ENCODE measurements at regions of chr17 and their contacts with region 1.

Region 1: GRCh38 chr17:17041571-17042380 is 481 bp upstream of the MPRIP start:
- DNase-seq: peak; percentile 88 to 96 (median 95)
- ATAC-seq: peak; percentile 99
- H3K4me3 ChIP-seq: peak overlapping the region; percentile 73
- H3K4me3 Mint-ChIP-seq: peak overlapping the region; percentile 66 to 94 (median 76)
- H3K27ac ChIP-seq: peak overlapping the region; percentile 61
- H3K27ac Mint-ChIP-seq: peak overlapping the region in 2 of 9 donors; percentile 50 to 71
- H3K4me1 ChIP-seq: peaks cover 35% of the 10 kb centered on the region in 2 donors
- H3K4me1 Mint-ChIP-seq: peaks cover 37 to 47% (median 43%) of the 10 kb centered on the region in 7 donors
- H3K27me3 ChIP-seq: no peaks in the 10 kb centered on the region
- H3K27me3 Mint-ChIP-seq: peaks cover 0 to 4% (median 0%) of the 10 kb centered on the region in 5 donors

Region 2: GRCh38 chr17:17001874-17002520 is 39.8 kb before region 1 on chr17:
- CTCF ChIA-PET with region 1: no interaction called
- POLR2A ChIA-PET with region 1: no interaction called
- intact Hi-C with region 1: loop called (anchors 5 kb)
- DNase-seq: peak; percentile 46 to 81 (median 74)
- ATAC-seq: peak; percentile 85
- H3K4me3 ChIP-seq: no peak overlapping the region
- H3K4me3 Mint-ChIP-seq: no peak overlapping the region
- H3K27ac ChIP-seq: no peak overlapping the region
- H3K27ac Mint-ChIP-seq: no peak overlapping the region
- H3K4me1 ChIP-seq: peaks cover 3 to 4% of the 10 kb centered on the region in 2 donors
- H3K4me1 Mint-ChIP-seq: peaks cover 0 to 5% (median 0%) of the 10 kb centered on the region in 7 donors
- H3K27me3 ChIP-seq: no peaks in the 10 kb centered on the region
- H3K27me3 Mint-ChIP-seq: peaks cover 0 to 7% (median 0%) of the 10 kb centered on the region in 5 donors

Region 3: DNA sequence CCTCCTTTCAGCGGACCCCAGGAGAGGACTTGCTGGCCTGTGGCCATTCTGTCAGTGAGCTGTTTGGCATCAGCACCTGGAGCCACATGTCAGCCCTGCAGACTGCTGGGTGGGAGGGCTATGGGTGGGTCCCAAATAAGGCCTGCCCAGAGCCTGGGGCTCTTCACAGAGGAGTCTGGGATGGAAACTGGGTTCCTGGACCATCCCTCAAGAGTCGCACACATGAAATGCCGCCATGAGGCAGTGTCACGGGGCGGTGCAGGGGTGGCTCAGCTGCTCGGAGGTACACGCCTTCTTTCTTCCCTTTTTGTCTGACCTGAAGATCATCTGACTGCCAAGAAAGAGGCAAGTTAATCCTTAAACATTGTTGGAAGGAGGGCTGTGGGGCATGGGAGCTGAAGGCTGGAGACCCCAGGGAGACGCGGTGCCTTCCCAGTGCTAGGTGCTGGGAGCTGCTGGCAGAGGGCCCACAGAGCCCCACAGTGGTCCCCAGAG is 15.3 kb after region 1 on chr17:
- CTCF ChIA-PET with region 1: no interaction called
- POLR2A ChIA-PET with region 1: no interaction called
- intact Hi-C with region 1: no loop called
- DNase-seq: no peak
- ATAC-seq: no peak
- H3K4me3 ChIP-seq: no peak overlapping the region
- H3K4me3 Mint-ChIP-seq: no peak overlapping the region
- H3K27ac ChIP-seq: no peak overlapping the region
- H3K27ac Mint-ChIP-seq: peak overlapping the region in 1 of 9 donors; percentile 67
- H3K4me1 ChIP-seq: peaks cover 0 to 14% of the 10 kb centered on the region in 2 donors
- H3K4me1 Mint-ChIP-seq: peaks cover 17 to 52% (median 37%) of the 10 kb centered on the region in 7 donors
- H3K27me3 ChIP-seq: no peaks in the 10 kb centered on the region
- H3K27me3 Mint-ChIP-seq: no peaks in the 10 kb centered on the region

Region 4: GRCh38 chr17:17179371-17179827 is 137.6 kb after region 1 on chr17:
- CTCF ChIA-PET with region 1: no interaction called
- POLR2A ChIA-PET with region 1: no interaction called
- intact Hi-C with region 1: loop called in 1 of 2 experiments (anchors 2 kb)
- DNase-seq: peak in 7 of 9 donors; percentile 25 to 59 (median 45)
- ATAC-seq: peak; percentile 63
- H3K4me3 ChIP-seq: peak overlapping the region; percentile 68
- H3K4me3 Mint-ChIP-seq: peak overlapping the region; percentile 73 to 95 (median 84)
- H3K27ac ChIP-seq: peak overlapping the region; percentile 70
- H3K27ac Mint-ChIP-seq: peak overlapping the region; percentile 94 to 100 (median 99)
- H3K4me1 ChIP-seq: peaks cover 61 to 98% of the 10 kb centered on the region in 2 donors
- H3K4me1 Mint-ChIP-seq: peaks cover 46 to 94% (median 82%) of the 10 kb centered on the region in 7 donors
- H3K27me3 ChIP-seq: no peaks in the 10 kb centered on the region
- H3K27me3 Mint-ChIP-seq: no peaks in the 10 kb centered on the region

Region 5: GRCh38 chr17:17237026-17237799 is 195.4 kb after region 1 on chr17 and contains the start of gene FLCN:
- CTCF ChIA-PET with region 1: no interaction called
- POLR2A ChIA-PET with region 1: no interaction called
- intact Hi-C with region 1: loop called in 1 of 2 experiments (anchors 1 kb)
- DNase-seq: peak; percentile 86 to 96 (median 91)
- ATAC-seq: peak; percentile 95
- H3K4me3 ChIP-seq: peak within 1 kb of the TSS; percentile 92
- H3K4me3 Mint-ChIP-seq: peak within 1 kb of the TSS; percentile 90 to 99 (median 96)
- H3K27ac ChIP-seq: peak within 1 kb of the TSS; percentile 97
- H3K27ac Mint-ChIP-seq: peak within 1 kb of the TSS; percentile 97 to 100 (median 98)
- H3K4me1 ChIP-seq: peaks cover 13 to 18% of the 10 kb centered on the region in 2 donors
- H3K4me1 Mint-ChIP-seq: peaks cover 16 to 38% (median 31%) of the 10 kb centered on the region in 7 donors
- H3K27me3 ChIP-seq: no peaks in the 10 kb centered on the region
- H3K27me3 Mint-ChIP-seq: peaks cover 0 to 6% (median 0%) of the 10 kb centered on the region in 5 donors
- total RNA-seq, gene FLCN: 39.4 to 94.7 (median 66.9) TPM

Region 6: GRCh38 chr17:17416007-17416399 is 374.2 kb after region 1 on chr17:
- CTCF ChIA-PET with region 1: no interaction called
- POLR2A ChIA-PET with region 1: no interaction called
- intact Hi-C with region 1: no loop called
- DNase-seq: peak in 6 of 9 donors; percentile 19 to 48 (median 30)
- ATAC-seq: peak; percentile 70
- H3K4me3 ChIP-seq: no peak overlapping the region
- H3K4me3 Mint-ChIP-seq: peak overlapping the region in 1 of 10 donors; percentile 46
- H3K27ac ChIP-seq: no peak overlapping the region
- H3K27ac Mint-ChIP-seq: peak overlapping the region in 8 of 9 donors; percentile 17 to 77 (median 41)
- H3K4me1 ChIP-seq: peaks cover 0 to 9% of the 10 kb centered on the region in 2 donors
- H3K4me1 Mint-ChIP-seq: peaks cover 10 to 28% (median 22%) of the 10 kb centered on the region in 7 donors
- H3K27me3 ChIP-seq: no peaks in the 10 kb centered on the region
- H3K27me3 Mint-ChIP-seq: peaks cover 0 to 5% (median 0%) of the 10 kb centered on the region in 5 donors

Region 7: GRCh38 chr17:17476865-17477467 is 435.2 kb after region 1 on chr17 and contains the start of gene MED9:
- CTCF ChIA-PET with region 1: no interaction called
- POLR2A ChIA-PET with region 1: no interaction called
- intact Hi-C with region 1: loop called (anchors 5 kb)
- DNase-seq: peak; percentile 90 to 98 (median 94)
- ATAC-seq: peak; percentile 100
- H3K4me3 ChIP-seq: peak within 1 kb of the TSS; percentile 98
- H3K4me3 Mint-ChIP-seq: peak within 1 kb of the TSS; percentile 85 to 92 (median 92)
- H3K27ac ChIP-seq: peak within 1 kb of the TSS; percentile 87
- H3K27ac Mint-ChIP-seq: peak within 1 kb of the TSS; percentile 72 to 95 (median 92)
- H3K4me1 ChIP-seq: peaks cover 10 to 29% of the 10 kb centered on the region in 2 donors
- H3K4me1 Mint-ChIP-seq: peaks cover 20 to 58% (median 49%) of the 10 kb centered on the region in 7 donors
- H3K27me3 ChIP-seq: no peaks in the 10 kb centered on the region
- H3K27me3 Mint-ChIP-seq: peaks cover 0 to 11% (median 0%) of the 10 kb centered on the region in 5 donors
- total RNA-seq, gene MED9: 14.0 to 24.1 (median 17.2) TPM

Measured in naive thymus-derived CD4-positive, alpha-beta T cell (primary cell).